ENCODE measurements at regions of chr10 and their contacts with region 1.

Region 1: DNA sequence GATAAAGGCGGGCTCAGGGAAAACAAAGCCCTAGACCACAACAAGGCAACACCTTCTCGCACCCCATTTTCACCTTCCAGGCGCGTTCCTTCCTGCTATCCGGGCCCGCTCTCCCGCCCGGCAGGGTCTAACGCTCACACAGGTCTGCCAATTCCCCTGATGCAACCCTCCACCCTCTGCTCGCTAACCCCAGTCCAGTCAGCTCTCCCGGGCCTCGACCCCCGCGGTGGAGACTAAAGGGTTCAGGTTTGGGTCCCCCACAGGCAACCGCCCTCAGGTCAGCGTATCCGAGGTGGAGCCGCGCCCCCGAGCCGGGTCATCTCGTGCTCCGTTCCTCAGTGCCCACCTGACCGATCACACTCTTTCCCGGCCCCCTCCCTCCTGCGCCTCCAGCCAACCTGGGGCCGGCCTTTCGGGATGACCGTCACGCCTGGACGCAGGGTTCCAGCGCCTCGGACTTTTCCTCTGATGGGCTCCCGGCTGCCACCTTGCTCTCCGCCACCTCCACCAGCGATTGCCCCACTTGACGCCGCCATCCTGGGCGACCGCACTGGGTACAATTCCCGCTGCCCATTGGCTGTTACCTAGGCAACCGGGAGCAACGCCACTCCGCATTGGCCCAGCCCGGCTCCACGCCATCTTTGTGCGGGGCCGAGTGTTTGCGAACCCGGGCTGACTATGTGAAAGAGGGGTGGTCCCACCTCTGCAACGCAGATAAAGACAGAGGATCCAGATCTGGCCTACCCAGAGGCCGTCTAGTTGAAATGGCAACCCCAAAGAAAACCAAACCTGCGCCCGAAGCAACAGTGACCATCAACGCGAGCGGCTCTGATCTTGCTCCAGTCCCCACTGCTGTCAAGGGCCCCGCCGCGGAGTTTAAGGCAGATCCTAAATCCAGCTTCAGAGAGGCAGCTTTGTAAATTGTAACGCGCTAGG is at the start of gene MORN4:
- DNase-seq: peak; percentile 89 to 96
- ATAC-seq: peak; percentile 98 to 100 (median 99)
- H3K4me3 ChIP-seq: peak within 1 kb of the TSS; percentile 53
- H3K4me3 Mint-ChIP-seq: peak within 1 kb of the TSS; percentile 99
- H3K27ac ChIP-seq: no peak within 1 kb of the TSS
- H3K27ac Mint-ChIP-seq: peak within 1 kb of the TSS; percentile 85 to 91
- H3K4me1 ChIP-seq: peaks cover 12% of the 10 kb centered on the region
- H3K4me1 Mint-ChIP-seq: peaks cover 14% of the 10 kb centered on the region in 2 donors
- H3K27me3 ChIP-seq: no peaks in the 10 kb centered on the region
- H3K27me3 Mint-ChIP-seq: peaks cover 4 to 7% of the 10 kb centered on the region in 2 donors
- CTCF ChIP-seq: no peak
- total RNA-seq, gene MORN4: 0.14 to 2.0 (median 1.6) TPM

Region 2: GRCh38 chr10:97648562-97649404 is 15.6 kb after region 1 on chr10:
- intact Hi-C with region 1: loop called (anchors 1 kb)
- DNase-seq: peak; percentile 42 to 72
- ATAC-seq: peak; percentile 96 to 100 (median 98)
- H3K4me3 ChIP-seq: peak overlapping the region; percentile 5
- H3K4me3 Mint-ChIP-seq: peak overlapping the region; percentile 84
- H3K27ac ChIP-seq: peak overlapping the region; percentile 83
- H3K27ac Mint-ChIP-seq: peak overlapping the region; percentile 93 to 94
- H3K4me1 ChIP-seq: peaks cover 20% of the 10 kb centered on the region
- H3K4me1 Mint-ChIP-seq: peaks cover 19 to 31% of the 10 kb centered on the region in 2 donors
- H3K27me3 ChIP-seq: no peaks in the 10 kb centered on the region
- H3K27me3 Mint-ChIP-seq: no peaks in the 10 kb centered on the region
- CTCF ChIP-seq: no peak

Region 3: DNA sequence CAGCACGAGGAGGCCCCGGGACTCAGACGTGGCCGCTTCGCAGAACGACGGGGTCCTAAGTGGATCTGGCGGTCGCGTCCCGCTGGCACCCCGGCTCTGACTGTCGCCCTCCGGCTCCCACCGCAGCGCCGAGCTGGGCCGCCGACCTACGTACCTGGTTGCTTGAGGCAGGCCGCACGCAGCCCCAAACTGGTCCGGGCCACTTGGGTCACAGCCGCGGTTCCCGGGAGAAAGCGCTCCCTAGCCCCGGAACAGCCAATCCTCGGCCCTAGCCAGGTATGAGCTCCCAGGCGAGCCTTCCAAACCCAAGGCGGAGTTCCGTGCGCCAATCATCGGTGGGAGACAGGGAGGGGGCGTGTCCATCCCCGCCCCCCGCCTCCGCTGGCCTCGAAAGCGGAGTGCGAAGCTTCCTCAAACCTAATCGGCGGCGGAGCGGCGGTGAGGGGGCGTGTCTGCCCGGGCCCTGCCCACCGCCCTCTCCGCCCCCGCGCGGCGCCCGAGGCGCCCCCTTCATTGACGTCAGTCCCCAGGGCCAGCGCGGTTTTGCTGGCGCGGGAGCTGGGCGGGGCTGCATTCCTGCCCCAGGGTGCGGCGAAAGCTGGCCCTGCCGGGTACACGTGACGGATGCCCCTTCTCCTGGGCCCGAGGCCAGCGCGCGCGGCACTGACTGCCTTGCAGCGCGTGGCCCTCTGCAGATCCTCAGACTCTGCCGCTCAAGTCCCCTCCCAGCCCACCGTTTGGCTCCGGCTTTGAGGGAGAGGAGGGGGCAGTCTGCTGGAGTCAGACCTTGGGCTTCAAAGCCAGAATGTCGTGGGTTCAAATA is 54.0 kb after region 1 on chr10 and contains the start of gene AVPI1:
- intact Hi-C with region 1: no loop called
- DNase-seq: peak; percentile 94 to 98
- ATAC-seq: peak; percentile 92 to 98 (median 93)
- H3K4me3 ChIP-seq: peak within 1 kb of the TSS; percentile 80
- H3K4me3 Mint-ChIP-seq: peak within 1 kb of the TSS; percentile 85
- H3K27ac ChIP-seq: peak within 1 kb of the TSS; percentile 65
- H3K27ac Mint-ChIP-seq: peak within 1 kb of the TSS; percentile 76 to 80
- H3K4me1 ChIP-seq: peaks cover 21% of the 10 kb centered on the region
- H3K4me1 Mint-ChIP-seq: peaks cover 9 to 18% of the 10 kb centered on the region in 2 donors
- H3K27me3 ChIP-seq: no peaks in the 10 kb centered on the region
- H3K27me3 Mint-ChIP-seq: no peaks in the 10 kb centered on the region
- CTCF ChIP-seq: no peak
- total RNA-seq, gene AVPI1: 6.1 to 8.4 (median 6.8) TPM